ENCODE measurements at regions of chr9 and their contacts with region 1.

Region 1: GRCh38 chr9:27726244-27727081 is 153.2 kb upstream of the C9orf72 start:
- DNase-seq: peak; percentile 38 to 54
- ATAC-seq: peak; percentile 74

Region 2: GRCh38 chr9:27505744-27506161 is 220.7 kb before region 1 on chr9:
- intact Hi-C with region 1: no loop called
- DNase-seq: no peak
- ATAC-seq: no peak

Region 3: DNA sequence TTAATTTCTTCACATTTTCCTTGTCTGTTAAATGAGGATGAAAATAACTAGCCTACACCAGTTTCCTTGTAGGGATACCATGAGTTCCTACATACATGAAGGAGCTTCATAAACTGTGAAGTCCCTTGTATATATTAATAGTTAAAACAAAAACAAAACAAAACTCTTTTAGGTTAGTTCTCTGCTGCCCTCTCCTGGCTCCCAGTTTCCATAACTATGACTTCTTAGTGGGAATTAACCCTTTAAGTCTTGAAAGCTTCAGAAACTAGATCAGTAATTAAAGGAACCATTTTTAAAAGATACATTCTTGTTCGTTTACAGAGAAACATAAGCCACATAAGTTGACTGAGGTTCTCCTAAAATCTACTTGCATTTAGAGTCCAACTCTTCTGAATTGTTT is 346.8 kb after region 1 on chr9:
- intact Hi-C with region 1: loop called in 1 of 2 experiments (anchors 10 kb)
- DNase-seq: peak in 1 of 2 donors; percentile 35
- ATAC-seq: no peak